ENCODE measurements at regions of chr6 and their contacts with region 1.

Region 1: DNA sequence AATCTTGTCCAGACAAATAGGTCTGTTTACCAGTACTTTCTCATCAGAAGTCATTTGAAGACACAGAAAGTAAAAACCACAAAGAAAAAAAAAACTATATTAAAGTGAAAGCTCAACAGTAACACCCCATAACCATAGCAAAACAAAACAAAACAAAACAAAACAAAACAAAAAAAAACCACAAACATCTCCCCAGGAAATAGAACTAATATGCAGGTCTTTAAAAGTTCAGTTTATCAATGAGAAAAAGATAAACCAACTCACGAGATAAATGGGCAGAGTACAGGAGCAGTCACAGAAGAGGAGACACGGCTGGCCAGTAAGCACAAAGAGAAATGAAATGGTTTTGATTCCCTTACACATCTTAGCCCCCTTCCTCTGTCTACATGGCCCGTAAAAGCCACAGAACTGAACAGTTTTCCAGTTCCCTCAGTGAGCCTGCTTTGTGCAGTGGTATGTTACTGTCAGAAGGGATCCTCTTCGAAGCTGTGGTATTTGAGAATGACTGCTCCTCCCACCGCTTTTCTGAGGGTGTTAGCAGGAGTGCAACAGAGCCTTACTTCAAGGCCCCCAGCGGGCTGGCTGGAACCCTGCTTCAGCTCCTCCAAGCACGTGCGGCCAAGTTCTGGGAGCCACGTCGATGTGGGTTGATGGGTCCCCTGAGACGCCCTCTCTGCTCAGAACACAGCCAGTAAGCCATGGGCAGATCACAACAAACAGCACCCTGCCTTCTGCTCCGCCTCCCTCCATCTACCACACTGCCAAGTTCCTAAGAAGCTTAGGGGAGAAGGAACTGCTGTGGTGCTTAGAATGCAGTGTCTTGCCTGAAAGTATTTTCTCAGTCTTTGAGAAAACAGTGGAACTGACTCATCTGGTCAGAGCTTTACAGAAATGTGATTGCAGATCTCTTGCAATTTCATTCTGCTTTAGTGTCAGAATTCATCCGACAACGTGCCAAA is 14.0 kb downstream of the UST start:
- DNase-seq: peak; percentile 40
- H3K4me3 Mint-ChIP-seq: peak overlapping the region; percentile 73
- H3K27ac Mint-ChIP-seq: peak overlapping the region; percentile 81
- H3K4me1 Mint-ChIP-seq: peaks cover 53% of the 10 kb centered on the region
- H3K27me3 Mint-ChIP-seq: peaks cover 53% of the 10 kb centered on the region

Region 2: GRCh38 chr6:148565930-148566663 is 194.8 kb before region 1 on chr6:
- intact Hi-C with region 1: loop called (anchors 5 kb)
- DNase-seq: no peak
- H3K4me3 Mint-ChIP-seq: no peak overlapping the region
- H3K27ac Mint-ChIP-seq: no peak overlapping the region
- H3K4me1 Mint-ChIP-seq: peaks cover 10% of the 10 kb centered on the region
- H3K27me3 Mint-ChIP-seq: peaks cover 22% of the 10 kb centered on the region

Region 3: DNA sequence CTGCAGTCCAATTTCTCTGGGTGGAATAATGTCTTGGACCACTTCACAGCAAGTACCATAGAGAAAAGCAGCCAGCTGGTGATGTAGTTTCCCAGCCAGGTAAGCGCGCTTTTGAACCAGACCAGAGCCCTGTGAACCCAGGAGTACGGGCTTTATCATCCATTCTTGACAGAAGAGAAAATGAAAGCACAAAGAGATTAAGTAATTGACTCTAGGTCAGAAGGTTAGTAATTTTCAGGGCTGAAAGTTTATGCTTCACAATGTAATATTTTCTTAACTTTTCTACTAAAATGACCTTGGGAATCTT is 21.1 kb before region 1 on chr6:
- intact Hi-C with region 1: loop called (anchors 1 kb)
- DNase-seq: no peak
- H3K4me3 Mint-ChIP-seq: no peak overlapping the region
- H3K27ac Mint-ChIP-seq: no peak overlapping the region
- H3K4me1 Mint-ChIP-seq: no peaks in the 10 kb centered on the region
- H3K27me3 Mint-ChIP-seq: peaks cover 38% of the 10 kb centered on the region

Region 4: DNA sequence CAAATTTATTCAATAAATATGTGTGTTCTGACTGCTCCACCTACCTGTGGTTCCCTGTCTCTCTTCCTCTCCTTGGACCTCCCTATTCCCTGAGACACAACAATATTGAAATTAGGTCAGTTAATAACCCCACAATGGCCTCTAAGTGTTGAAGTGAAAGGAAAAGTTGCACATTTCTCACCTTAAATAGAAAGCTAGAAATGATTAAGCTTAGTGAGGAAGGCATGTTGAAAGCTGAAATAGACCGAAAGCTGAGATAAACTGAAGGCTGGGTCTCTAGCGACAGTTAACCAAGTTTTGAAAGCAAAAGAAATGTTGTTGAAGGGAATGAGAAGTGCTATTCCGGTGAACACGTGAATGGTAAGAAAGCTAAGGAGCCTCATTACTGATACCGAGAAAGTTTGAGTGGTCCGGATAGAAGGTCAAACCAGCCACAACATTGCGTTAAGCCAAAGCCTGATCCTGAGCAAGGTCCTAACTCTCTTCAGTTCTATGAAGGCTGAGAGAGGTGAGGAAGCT is 20.1 kb after region 1 on chr6:
- intact Hi-C with region 1: loop called (anchors 1 kb)
- DNase-seq: no peak
- H3K4me3 Mint-ChIP-seq: no peak overlapping the region
- H3K27ac Mint-ChIP-seq: peak overlapping the region; percentile 14
- H3K4me1 Mint-ChIP-seq: peaks cover 10% of the 10 kb centered on the region
- H3K27me3 Mint-ChIP-seq: peaks cover 8% of the 10 kb centered on the region

Region 5: DNA sequence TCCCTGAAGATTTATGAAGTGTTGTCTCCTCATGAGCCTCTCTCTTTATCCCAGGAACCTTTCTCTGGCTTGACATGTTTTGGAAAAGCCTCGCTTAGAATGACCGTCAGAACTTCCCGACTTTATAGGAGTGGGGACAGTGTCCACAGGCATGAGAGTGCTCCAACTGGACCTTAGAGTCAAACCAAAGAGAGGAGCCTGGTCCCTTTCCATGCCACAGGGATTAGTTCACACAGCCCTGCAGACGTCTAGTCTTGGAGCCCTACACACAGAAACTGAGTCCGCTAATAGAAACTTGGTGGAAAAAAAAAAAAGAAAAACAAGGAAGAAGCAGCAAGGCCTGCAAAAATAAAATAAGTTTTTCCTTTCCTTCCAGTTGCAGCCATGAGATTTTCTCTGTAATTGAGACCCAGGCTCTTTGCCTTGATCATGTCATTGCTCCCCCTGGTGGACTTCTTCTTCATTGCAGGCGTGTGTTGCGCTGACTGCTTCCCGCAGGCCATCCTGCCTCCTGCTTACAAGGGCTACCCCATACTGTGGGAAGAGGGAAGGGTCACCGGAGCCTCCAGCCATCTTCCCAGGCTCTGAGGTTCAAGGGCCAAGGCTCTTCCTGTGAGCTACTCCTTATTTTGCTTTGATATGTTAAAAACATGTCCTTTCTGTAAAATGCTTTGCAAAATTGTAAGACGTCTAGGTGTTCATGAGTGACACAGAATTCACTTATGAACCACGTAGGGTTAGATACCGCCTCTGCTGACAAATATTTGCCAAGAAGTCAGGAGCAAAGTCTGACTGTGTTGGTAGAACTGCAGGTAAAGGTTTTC is 187.0 kb after region 1 on chr6:
- intact Hi-C with region 1: loop called (anchors 5 kb)
- DNase-seq: peak; percentile 59
- H3K4me3 Mint-ChIP-seq: no peak overlapping the region
- H3K27ac Mint-ChIP-seq: no peak overlapping the region
- H3K4me1 Mint-ChIP-seq: peaks cover 2% of the 10 kb centered on the region
- H3K27me3 Mint-ChIP-seq: peaks cover 27% of the 10 kb centered on the region

Region 6: DNA sequence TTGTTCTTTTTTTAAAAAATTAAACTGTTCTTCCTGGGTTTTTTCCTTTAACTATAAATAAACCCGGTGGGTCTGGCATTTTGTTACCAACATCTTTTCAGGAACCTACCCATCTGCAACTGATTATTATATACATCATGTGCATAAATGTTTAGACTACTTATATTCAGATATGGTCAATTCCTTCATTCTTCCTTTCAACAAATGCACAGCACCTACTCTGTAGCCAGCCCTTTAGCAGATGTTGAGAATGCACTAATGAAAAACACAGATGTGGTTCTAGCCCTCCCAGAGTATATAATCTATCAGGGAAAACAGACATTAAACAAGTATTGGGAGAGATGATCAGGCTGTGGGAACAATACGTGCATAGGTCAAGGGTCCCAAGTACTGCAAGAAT is 223.1 kb after region 1 on chr6:
- intact Hi-C with region 1: no loop called
- DNase-seq: no peak
- H3K4me3 Mint-ChIP-seq: no peak overlapping the region
- H3K27ac Mint-ChIP-seq: no peak overlapping the region
- H3K4me1 Mint-ChIP-seq: no peaks in the 10 kb centered on the region
- H3K27me3 Mint-ChIP-seq: peaks cover 32% of the 10 kb centered on the region

Measured in activated T-helper 2 cell treated with anti-CD3 and anti-CD28 coated beads, Interferon-gamma antibody, Interleukin-2, Interleukin-4, amounts not matched to agents 10 μg/mL and 5 μg/mL and 100 μg/mL, durations not matched to agents 14 hours and 24 hours and 36 hours (primary cell).